Panc1 (cell line): ENCODE measurements at regions of chr4 and their contacts with region 1.

Region 1: GRCh38 chr4:88251924-88252323 is 32.4 kb downstream of the PPM1K start:
- DNase-seq: no peak
- ATAC-seq: no peak
- H3K4me3 ChIP-seq: no peak overlapping the region
- H3K27ac ChIP-seq: no peak overlapping the region
- H3K4me1 ChIP-seq: no peaks in the 10 kb centered on the region
- H3K27me3 ChIP-seq: no peaks in the 10 kb centered on the region
- CTCF ChIP-seq: no peak

Region 2: GRCh38 chr4:88147799-88148217 is 104.1 kb before region 1 on chr4:
- CTCF ChIA-PET with region 1: no interaction called
- POLR2A ChIA-PET with region 1: no interaction called
- in situ Hi-C with region 1: no loop called
- intact Hi-C with region 1: no loop called
- DNase-seq: no peak
- ATAC-seq: peak; percentile 58; the same call in 1 of the 2 replicates
- H3K4me3 ChIP-seq: no peak overlapping the region
- H3K27ac ChIP-seq: peak overlapping the region; percentile 63
- H3K4me1 ChIP-seq: peaks cover 36% of the 10 kb centered on the region
- H3K27me3 ChIP-seq: no peaks in the 10 kb centered on the region
- CTCF ChIP-seq: no peak

Region 3: GRCh38 chr4:88609387-88609786 is 357.5 kb after region 1 on chr4:
- CTCF ChIA-PET with region 1: interaction called, 10 read pairs
- POLR2A ChIA-PET with region 1: no interaction called
- in situ Hi-C with region 1: no loop called
- intact Hi-C with region 1: no loop called
- DNase-seq: no peak
- ATAC-seq: no peak
- H3K4me3 ChIP-seq: no peak overlapping the region
- H3K27ac ChIP-seq: no peak overlapping the region
- H3K4me1 ChIP-seq: no peaks in the 10 kb centered on the region
- H3K27me3 ChIP-seq: no peaks in the 10 kb centered on the region
- CTCF ChIP-seq: no peak